Left cardiac atrium (tissue), 4 donors: ENCODE measurements at regions of chr1 and their contacts with region 1.

Region 1: DNA sequence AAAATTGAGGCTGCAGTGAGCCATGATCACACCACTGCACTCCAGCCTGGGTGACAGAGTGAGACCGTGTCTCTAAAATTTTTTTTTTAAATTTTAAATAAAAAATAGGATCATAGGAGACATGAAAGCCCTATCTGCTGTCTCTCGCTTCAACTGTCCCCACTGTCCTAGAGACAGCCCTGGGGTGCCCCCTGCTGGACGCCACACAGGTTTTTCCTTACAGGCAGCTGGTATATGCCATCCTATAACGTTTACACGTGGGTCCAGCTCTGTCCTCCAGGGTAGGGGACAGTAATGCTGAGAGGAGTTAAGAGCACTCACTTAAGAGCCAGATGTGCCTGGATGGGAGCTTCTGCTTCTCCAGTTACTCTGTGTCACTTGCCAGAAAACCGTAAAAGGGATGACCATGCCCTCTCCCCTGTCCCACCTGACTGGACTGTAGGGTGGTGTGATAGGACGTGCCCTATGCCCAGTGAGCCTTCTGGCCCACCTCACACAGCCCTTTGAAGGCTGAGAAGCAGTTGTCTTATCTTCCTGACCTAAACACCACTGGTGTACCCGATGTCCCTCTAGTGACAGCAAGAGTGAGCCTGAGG is 8.5 kb downstream of the FBXO2 start:
- DNase-seq: peak; percentile 87
- ATAC-seq: peak in 1 of 2 donors; percentile 19

Region 2: GRCh38 chr1:11037740-11038182 is 608.0 kb before region 1 on chr1:
- intact Hi-C with region 1: loop called (anchors 5 kb)
- DNase-seq: peak; percentile 88
- ATAC-seq: peak; percentile 92 to 97

Region 3: GRCh38 chr1:11248155-11248554 is 397.6 kb before region 1 on chr1:
- intact Hi-C with region 1: loop called in 1 of 2 experiments (anchors 5 kb)
- DNase-seq: no peak
- ATAC-seq: no peak

Region 4: DNA sequence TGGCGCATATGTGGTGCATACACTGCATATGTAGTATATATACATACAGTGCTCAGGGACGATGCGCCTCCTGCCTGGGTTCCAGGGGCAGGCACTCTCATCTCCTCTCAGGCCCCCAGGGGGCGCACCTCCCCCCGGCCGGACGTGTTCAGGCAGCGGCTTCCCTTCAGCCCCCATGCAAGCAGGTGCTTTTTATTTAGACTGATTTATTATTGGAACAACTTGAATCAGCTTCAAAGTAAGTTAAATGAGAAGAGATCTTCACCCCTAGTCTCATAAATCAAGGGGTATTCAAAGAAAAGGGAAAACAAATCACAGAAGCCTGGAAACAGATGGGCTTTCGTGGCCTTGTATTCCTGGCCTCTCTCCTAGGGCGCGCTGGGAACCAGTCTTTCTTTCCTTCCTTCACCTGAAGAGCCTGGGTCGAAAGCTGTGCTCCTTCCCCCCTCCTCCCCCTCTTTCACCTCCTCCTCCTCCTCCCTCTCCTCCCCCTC is 308.1 kb before region 1 on chr1:
- intact Hi-C with region 1: loop called (anchors 2 to 10 kb)
- DNase-seq: peak; percentile 48
- ATAC-seq: no peak

Region 5: GRCh38 chr1:11719313-11720032 is 73.7 kb after region 1 on chr1:
- intact Hi-C with region 1: loop called (anchors 1 to 5 kb)
- DNase-seq: peak; percentile 87
- ATAC-seq: peak; percentile 77 to 85

Region 6: DNA sequence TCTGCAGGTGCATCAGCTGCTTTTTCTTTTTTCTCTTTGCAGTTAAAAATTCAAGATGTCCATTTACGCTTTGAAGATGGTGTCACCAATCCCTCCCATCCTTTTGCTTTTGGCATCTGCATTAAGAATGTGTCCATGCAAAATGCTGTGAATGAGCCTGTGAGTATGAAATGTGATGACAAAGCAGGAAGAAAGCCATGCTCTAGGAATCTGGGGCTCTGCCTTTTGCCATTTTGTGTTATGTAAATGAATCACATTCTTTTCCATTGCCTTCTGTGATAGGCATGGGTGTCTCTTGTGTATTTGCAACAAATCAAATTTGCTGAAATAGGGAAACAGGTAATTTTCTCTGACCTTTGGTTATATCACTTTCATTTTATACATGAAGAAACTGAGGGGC is 603.4 kb after region 1 on chr1:
- intact Hi-C with region 1: no loop called
- DNase-seq: no peak
- ATAC-seq: no peak